H1 (cell line): ENCODE measurements at regions of chr18 and their contacts with region 1.

Region 1: GRCh38 chr18:8654503-8655451 is 45.5 kb downstream of the RAB12 start:
- DNase-seq: no peak
- H3K4me3 ChIP-seq: no peak overlapping the region
- H3K27ac ChIP-seq: no peak overlapping the region
- H3K4me1 ChIP-seq: peaks cover 0 to 2% (median 0%) of the 10 kb centered on the region in 4 experiments; a peak in 3 of 7 replicates
- H3K27me3 ChIP-seq: no peaks in the 10 kb centered on the region
- CTCF ChIP-seq: peak in 2 of 3 experiments; percentile 23 to 42; a peak in 2 of 4 replicates
- EP300 ChIP-seq: no peak
- POLR2A ChIP-seq: no peak
- RAD21 ChIP-seq: peak; percentile 65 to 72

Region 2: DNA sequence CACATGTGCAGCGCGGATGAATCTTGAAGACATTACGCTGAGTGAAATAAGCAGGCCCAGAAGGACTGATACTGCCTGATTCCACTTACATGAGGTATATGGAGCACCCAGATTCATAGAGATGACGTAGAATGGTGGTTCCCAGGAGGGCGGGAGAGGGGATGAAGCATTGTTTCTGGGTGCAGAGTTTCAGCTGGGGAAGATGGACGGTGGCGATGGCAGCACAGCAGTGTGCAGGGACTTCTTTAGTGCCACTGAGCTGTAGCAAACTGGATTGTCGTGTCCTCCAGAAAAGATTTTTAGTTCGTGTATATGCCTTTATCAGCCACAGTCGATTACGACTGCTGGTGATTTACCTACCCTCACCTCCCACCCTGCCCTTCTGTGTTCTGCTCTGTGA is 15.0 kb before region 1 on chr18:
- CTCF ChIA-PET with region 1: interaction called, 16 read pairs
- POLR2A ChIA-PET with region 1: interaction called, 3 read pairs
- DNase-seq: no peak
- H3K4me3 ChIP-seq: no peak overlapping the region
- H3K27ac ChIP-seq: no peak overlapping the region
- H3K4me1 ChIP-seq: peaks cover 0 to 2% (median 0%) of the 10 kb centered on the region in 4 experiments; a peak in 1 of 7 replicates
- H3K27me3 ChIP-seq: no peaks in the 10 kb centered on the region
- CTCF ChIP-seq: no peak
- EP300 ChIP-seq: no peak
- POLR2A ChIP-seq: peak in 1 of 2 experiments; percentile 65; a peak in 1 of 3 replicates
- RAD21 ChIP-seq: no peak

Region 3: GRCh38 chr18:8696749-8697211 is 42.0 kb after region 1 on chr18:
- CTCF ChIA-PET with region 1: interaction called, 22 read pairs
- POLR2A ChIA-PET with region 1: no interaction called
- DNase-seq: peak in 1 of 2 experiments; percentile 95
- H3K4me3 ChIP-seq: no peak overlapping the region
- H3K27ac ChIP-seq: no peak overlapping the region
- H3K4me1 ChIP-seq: no peaks in the 10 kb centered on the region
- H3K27me3 ChIP-seq: no peaks in the 10 kb centered on the region
- CTCF ChIP-seq: peak; percentile 72 to 82 (median 75)
- EP300 ChIP-seq: no peak
- POLR2A ChIP-seq: no peak
- RAD21 ChIP-seq: peak; percentile 73 to 79